ENCODE measurements at regions of chr11 and their contacts with region 1.

Region 1: DNA sequence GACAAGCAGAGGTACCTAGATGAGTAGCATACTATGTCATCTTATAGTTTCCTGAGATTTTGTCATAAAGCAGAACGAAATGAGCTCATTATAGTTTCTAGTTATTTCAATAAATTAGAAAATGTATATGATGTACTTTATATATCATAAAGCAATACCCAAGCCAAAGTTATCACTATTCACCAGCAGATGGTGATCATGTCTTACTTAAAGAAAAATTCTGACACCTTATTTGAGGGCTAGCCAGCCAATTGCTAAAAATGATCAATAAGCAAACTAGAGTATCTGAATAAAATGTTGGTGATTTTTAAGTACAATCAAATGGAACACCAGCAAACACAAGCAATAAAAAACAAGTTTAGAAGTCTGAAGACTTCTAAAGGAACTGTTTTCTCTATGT is 44.1 kb downstream of the RSF1 start:
- DNase-seq: peak in 6 of 9 donors; percentile 11 to 42 (median 25)
- ATAC-seq: no peak
- H3K4me3 ChIP-seq: no peak overlapping the region
- H3K4me3 Mint-ChIP-seq: no peak overlapping the region
- H3K27ac ChIP-seq: no peak overlapping the region
- H3K27ac Mint-ChIP-seq: peak overlapping the region in 1 of 9 donors; percentile 2
- H3K4me1 ChIP-seq: peaks cover 7 to 17% of the 10 kb centered on the region in 2 donors
- H3K4me1 Mint-ChIP-seq: peaks cover 21 to 86% (median 69%) of the 10 kb centered on the region in 7 donors
- H3K27me3 ChIP-seq: no peaks in the 10 kb centered on the region
- H3K27me3 Mint-ChIP-seq: no peaks in the 10 kb centered on the region

Region 2: GRCh38 chr11:77542296-77542695 is 234.2 kb before region 1 on chr11:
- CTCF ChIA-PET with region 1: no interaction called
- POLR2A ChIA-PET with region 1: no interaction called
- intact Hi-C with region 1: no loop called
- DNase-seq: no peak
- ATAC-seq: no peak
- H3K4me3 ChIP-seq: no peak overlapping the region
- H3K4me3 Mint-ChIP-seq: no peak overlapping the region
- H3K27ac ChIP-seq: no peak overlapping the region
- H3K27ac Mint-ChIP-seq: no peak overlapping the region
- H3K4me1 ChIP-seq: no peaks in the 10 kb centered on the region
- H3K4me1 Mint-ChIP-seq: no peaks in the 10 kb centered on the region
- H3K27me3 ChIP-seq: no peaks in the 10 kb centered on the region
- H3K27me3 Mint-ChIP-seq: no peaks in the 10 kb centered on the region

Region 3: DNA sequence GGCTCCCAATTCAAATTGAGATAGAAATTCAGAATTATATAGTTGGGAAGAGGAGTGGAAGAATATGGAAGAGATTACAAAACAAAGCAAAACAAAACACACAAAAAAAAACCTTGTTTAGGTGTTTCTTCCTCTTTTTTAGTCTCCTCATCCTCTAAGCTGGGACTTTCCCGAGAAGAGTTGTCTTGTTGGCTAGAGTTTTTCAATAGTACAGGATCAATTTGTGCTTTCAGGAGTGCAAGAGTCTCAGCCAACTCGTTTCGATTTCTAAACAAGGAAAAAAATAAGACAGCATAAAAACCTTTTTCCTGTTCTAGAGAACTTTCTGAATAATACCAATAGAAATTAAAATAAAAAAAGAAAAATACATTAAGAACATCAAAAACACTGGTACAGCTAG is 51.0 kb before region 1 on chr11:
- CTCF ChIA-PET with region 1: no interaction called
- POLR2A ChIA-PET with region 1: no interaction called
- intact Hi-C with region 1: no loop called
- DNase-seq: no peak
- ATAC-seq: no peak
- H3K4me3 ChIP-seq: no peak overlapping the region
- H3K4me3 Mint-ChIP-seq: no peak overlapping the region
- H3K27ac ChIP-seq: no peak overlapping the region
- H3K27ac Mint-ChIP-seq: peak overlapping the region in 1 of 9 donors; percentile 8
- H3K4me1 ChIP-seq: no peaks in the 10 kb centered on the region
- H3K4me1 Mint-ChIP-seq: peaks cover 0 to 12% (median 5%) of the 10 kb centered on the region in 7 donors
- H3K27me3 ChIP-seq: no peaks in the 10 kb centered on the region
- H3K27me3 Mint-ChIP-seq: no peaks in the 10 kb centered on the region

Region 4: GRCh38 chr11:77865805-77866204 is 89.3 kb after region 1 on chr11:
- CTCF ChIA-PET with region 1: no interaction called
- POLR2A ChIA-PET with region 1: no interaction called
- intact Hi-C with region 1: loop called in 1 of 2 experiments (anchors 5 kb)
- DNase-seq: no peak
- ATAC-seq: no peak
- H3K4me3 ChIP-seq: no peak overlapping the region
- H3K4me3 Mint-ChIP-seq: no peak overlapping the region
- H3K27ac ChIP-seq: no peak overlapping the region
- H3K27ac Mint-ChIP-seq: peak overlapping the region in 3 of 9 donors; percentile 5 to 68 (median 20)
- H3K4me1 ChIP-seq: no peaks in the 10 kb centered on the region
- H3K4me1 Mint-ChIP-seq: peaks cover 0 to 5% (median 0%) of the 10 kb centered on the region in 7 donors
- H3K27me3 ChIP-seq: no peaks in the 10 kb centered on the region
- H3K27me3 Mint-ChIP-seq: no peaks in the 10 kb centered on the region

Region 5: GRCh38 chr11:77908835-77909234 is 132.4 kb after region 1 on chr11:
- CTCF ChIA-PET with region 1: no interaction called
- POLR2A ChIA-PET with region 1: no interaction called
- intact Hi-C with region 1: loop called in 1 of 2 experiments (anchors 5 kb)
- DNase-seq: no peak
- ATAC-seq: no peak
- H3K4me3 ChIP-seq: no peak overlapping the region
- H3K4me3 Mint-ChIP-seq: no peak overlapping the region
- H3K27ac ChIP-seq: no peak overlapping the region
- H3K27ac Mint-ChIP-seq: no peak overlapping the region
- H3K4me1 ChIP-seq: no peaks in the 10 kb centered on the region
- H3K4me1 Mint-ChIP-seq: no peaks in the 10 kb centered on the region
- H3K27me3 ChIP-seq: no peaks in the 10 kb centered on the region
- H3K27me3 Mint-ChIP-seq: no peaks in the 10 kb centered on the region

Region 6: GRCh38 chr11:78000193-78000592 is 223.7 kb after region 1 on chr11:
- CTCF ChIA-PET with region 1: no interaction called
- POLR2A ChIA-PET with region 1: interaction called, 4 read pairs
- intact Hi-C with region 1: loop called (anchors 1 kb)
- DNase-seq: peak in 8 of 9 donors; percentile 15 to 60 (median 42)
- ATAC-seq: peak; percentile 86
- H3K4me3 ChIP-seq: no peak overlapping the region
- H3K4me3 Mint-ChIP-seq: no peak overlapping the region
- H3K27ac ChIP-seq: no peak overlapping the region
- H3K27ac Mint-ChIP-seq: no peak overlapping the region
- H3K4me1 ChIP-seq: peaks cover 5 to 7% of the 10 kb centered on the region in 2 donors
- H3K4me1 Mint-ChIP-seq: peaks cover 0 to 6% (median 4%) of the 10 kb centered on the region in 7 donors
- H3K27me3 ChIP-seq: no peaks in the 10 kb centered on the region
- H3K27me3 Mint-ChIP-seq: peaks cover 0 to 17% (median 0%) of the 10 kb centered on the region in 5 donors

Region 7: DNA sequence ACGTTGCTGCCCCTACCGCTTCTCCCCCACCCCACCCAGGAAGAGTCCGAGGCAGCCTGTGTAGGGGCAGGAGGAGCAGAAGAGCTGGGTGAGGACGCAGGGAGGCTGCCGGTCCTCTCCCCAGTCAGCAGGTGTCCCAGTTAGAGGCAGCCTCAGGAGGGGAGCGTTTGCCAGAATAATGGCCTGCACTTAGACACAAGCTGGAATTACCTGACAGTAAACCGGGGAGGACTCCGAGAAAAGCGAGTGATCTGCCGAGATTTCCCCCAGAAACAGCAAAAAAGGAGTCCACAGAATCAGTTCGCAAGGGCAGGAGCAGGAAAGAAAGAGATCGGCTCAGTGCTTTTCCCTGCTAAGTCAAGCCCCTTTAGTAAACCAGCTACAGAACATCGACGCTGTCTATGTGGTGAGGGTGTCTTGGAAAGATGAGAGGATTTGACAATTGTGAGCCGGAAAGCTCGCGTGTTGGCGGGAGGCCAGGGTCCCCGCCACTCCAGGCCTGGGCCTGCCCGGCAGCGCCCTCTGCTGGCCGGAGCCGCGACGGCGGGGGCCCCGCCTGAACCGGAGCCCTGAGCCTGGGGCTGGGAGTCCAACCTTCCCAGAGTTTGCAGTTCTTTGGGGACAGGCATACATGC is 269.5 kb after region 1 on chr11:
- CTCF ChIA-PET with region 1: interaction called, 3 read pairs
- POLR2A ChIA-PET with region 1: no interaction called
- intact Hi-C with region 1: loop called (anchors 1 kb)
- DNase-seq: peak; percentile 66 to 92 (median 83)
- ATAC-seq: peak; percentile 97
- H3K4me3 ChIP-seq: peak overlapping the region; percentile 57
- H3K4me3 Mint-ChIP-seq: peak overlapping the region; percentile 49 to 78 (median 73)
- H3K27ac ChIP-seq: no peak overlapping the region
- H3K27ac Mint-ChIP-seq: peak overlapping the region in 4 of 9 donors; percentile 4 to 67 (median 43)
- H3K4me1 ChIP-seq: peaks cover 0 to 10% of the 10 kb centered on the region in 2 donors
- H3K4me1 Mint-ChIP-seq: peaks cover 4 to 17% (median 9%) of the 10 kb centered on the region in 7 donors
- H3K27me3 ChIP-seq: no peaks in the 10 kb centered on the region
- H3K27me3 Mint-ChIP-seq: no peaks in the 10 kb centered on the region

Measured in naive thymus-derived CD4-positive, alpha-beta T cell (primary cell).